Mammary epithelial cell (primary cell): ENCODE measurements at regions of chr11 and their contacts with region 1.

Region 1: DNA sequence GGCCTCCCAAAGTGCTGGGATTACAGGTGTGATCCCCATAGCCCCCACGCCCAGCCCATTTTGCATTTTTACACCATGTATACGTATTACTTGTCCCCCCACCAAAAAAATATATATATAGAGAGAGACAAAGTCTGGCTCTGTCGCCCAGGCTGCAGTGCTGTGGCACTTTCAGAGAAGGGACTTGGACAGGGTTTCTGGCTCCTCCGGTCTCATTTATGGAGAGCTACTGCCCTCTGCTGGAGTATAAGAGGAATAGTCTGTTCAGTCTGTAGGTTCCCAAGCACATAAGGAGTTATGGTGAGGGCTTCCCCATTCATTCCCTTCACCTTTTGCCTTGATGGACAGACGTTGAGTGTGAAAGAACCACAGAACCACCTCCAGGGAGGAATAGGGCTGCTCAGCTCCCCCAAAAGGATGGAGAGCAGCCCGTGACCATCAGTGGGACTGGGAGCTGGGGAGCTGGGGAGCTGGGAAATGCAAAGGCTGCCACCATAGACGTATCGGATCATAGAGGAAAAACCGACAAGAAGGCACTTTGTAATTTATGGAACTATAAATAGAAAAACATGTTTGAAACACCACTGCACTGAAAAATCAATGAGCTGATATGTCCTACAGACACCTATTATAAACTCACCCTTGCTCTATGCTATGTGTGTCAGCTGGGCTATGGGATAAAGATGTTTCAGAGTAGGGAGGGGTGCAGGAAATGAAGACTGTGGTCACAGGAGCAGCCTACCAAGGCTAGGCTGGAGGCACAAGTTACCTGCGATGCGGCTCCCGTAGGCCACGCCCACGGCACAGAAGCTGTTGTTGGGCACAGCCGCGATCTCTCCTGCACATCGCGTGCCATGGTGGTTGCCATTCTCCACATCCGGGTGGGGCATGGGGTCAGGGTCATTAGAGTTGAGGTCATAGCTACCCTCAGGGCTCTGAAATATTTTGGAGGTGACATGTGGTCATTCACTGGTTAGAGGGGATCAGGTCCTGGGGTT is 5.2 kb downstream of the PCSK7 start:
- DNase-seq: peak; percentile 58
- H3K4me3 ChIP-seq: no peak overlapping the region
- H3K27ac ChIP-seq: no peak overlapping the region
- H3K4me1 ChIP-seq: peaks cover 22% of the 10 kb centered on the region
- H3K27me3 ChIP-seq: no peaks in the 10 kb centered on the region
- CTCF ChIP-seq: peak; percentile 68 to 81

Region 2: GRCh38 chr11:116787786-116788486 is 438.8 kb before region 1 on chr11 and contains the start of gene ZPR1:
- CTCF ChIA-PET with region 1: no interaction called
- dilution Hi-C with region 1: no loop called
- in situ Hi-C with region 1: no loop called
- intact Hi-C with region 1: loop called (anchors 1 kb)
- DNase-seq: peak; percentile 55
- H3K4me3 ChIP-seq: peak within 1 kb of the TSS; percentile 61 to 83 (median 81)
- H3K27ac ChIP-seq: peak within 1 kb of the TSS; percentile 75
- H3K4me1 ChIP-seq: peaks cover 14% of the 10 kb centered on the region
- H3K27me3 ChIP-seq: no peaks in the 10 kb centered on the region
- CTCF ChIP-seq: no peak
- total RNA-seq, gene ZPR1: 35.7 to 67.9 TPM

Region 3: DNA sequence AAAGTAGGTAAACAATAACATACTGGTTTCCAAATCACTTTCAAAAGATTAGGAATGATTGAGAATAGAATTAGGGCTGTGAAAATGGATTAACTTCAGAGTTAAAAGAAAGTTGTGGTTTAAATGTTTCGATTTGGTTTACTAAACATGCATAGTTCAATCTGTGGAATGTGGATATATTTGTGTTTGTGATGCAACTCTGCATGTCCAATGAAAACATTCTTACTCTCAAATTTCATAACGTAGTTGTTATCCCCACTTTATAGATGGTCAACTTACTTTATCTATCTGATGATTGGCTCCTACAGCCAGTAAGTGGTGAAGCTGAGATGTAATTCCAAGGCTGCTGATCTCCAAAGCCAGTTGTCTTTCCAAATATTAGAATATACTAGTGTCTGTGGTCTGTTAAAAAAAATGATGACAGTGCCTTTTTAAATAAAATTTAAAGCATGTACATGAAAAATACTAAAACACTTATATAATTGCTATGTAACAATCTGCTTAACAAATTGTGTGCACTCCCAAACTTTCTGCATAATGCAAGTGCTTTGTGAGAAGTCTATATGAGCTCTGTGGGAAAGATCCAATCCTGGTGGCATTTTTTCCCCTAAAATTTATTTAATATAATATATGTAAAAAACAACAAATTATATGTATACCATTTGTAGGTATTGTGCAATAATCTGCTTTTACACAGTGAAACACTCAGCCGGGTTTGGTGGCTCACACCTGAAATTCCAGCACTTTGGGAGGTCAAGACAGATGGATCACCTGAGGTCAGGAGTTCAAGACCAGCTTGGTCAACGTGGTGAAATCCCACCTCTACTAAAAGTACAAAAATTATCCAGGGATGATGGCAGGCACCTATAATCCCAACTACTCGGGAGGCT is 118.7 kb before region 1 on chr11:
- CTCF ChIA-PET with region 1: interaction called, 6 read pairs
- dilution Hi-C with region 1: no loop called
- in situ Hi-C with region 1: no loop called
- intact Hi-C with region 1: loop called (anchors 2 kb)
- DNase-seq: no peak
- H3K4me3 ChIP-seq: no peak overlapping the region
- H3K27ac ChIP-seq: no peak overlapping the region
- H3K4me1 ChIP-seq: no peaks in the 10 kb centered on the region
- H3K27me3 ChIP-seq: no peaks in the 10 kb centered on the region
- CTCF ChIP-seq: no peak

Region 4: GRCh38 chr11:117171404-117172061 is 55.2 kb before region 1 on chr11:
- CTCF ChIA-PET with region 1: no interaction called
- dilution Hi-C with region 1: loop called (anchors 5 kb)
- in situ Hi-C with region 1: no loop called
- intact Hi-C with region 1: no loop called
- DNase-seq: no peak
- H3K4me3 ChIP-seq: no peak overlapping the region
- H3K27ac ChIP-seq: no peak overlapping the region
- H3K4me1 ChIP-seq: no peaks in the 10 kb centered on the region
- H3K27me3 ChIP-seq: no peaks in the 10 kb centered on the region
- CTCF ChIP-seq: no peak

Region 5: GRCh38 chr11:117678658-117679406 is 452.1 kb after region 1 on chr11:
- CTCF ChIA-PET with region 1: no interaction called
- dilution Hi-C with region 1: no loop called
- in situ Hi-C with region 1: no loop called
- intact Hi-C with region 1: no loop called
- DNase-seq: no peak
- H3K4me3 ChIP-seq: no peak overlapping the region
- H3K27ac ChIP-seq: no peak overlapping the region
- H3K4me1 ChIP-seq: no peaks in the 10 kb centered on the region
- H3K27me3 ChIP-seq: no peaks in the 10 kb centered on the region
- CTCF ChIP-seq: no peak